HepG2 (cell line): ENCODE measurements at regions of chr17 and their contacts with region 1.

Region 1: GRCh38 chr17:37710344-37710886 is 34.4 kb downstream of the HNF1B start:
- DNase-seq: peak; percentile 99
- ATAC-seq: peak; percentile 54
- H3K4me3 ChIP-seq: no peak overlapping the region
- H3K27ac ChIP-seq: peak overlapping the region; percentile 99
- H3K4me1 ChIP-seq: peaks cover 95% of the 10 kb centered on the region
- H3K27me3 ChIP-seq: no peaks in the 10 kb centered on the region
- CTCF ChIP-seq: no peak
- EP300 ChIP-seq: peak; percentile 34 to 71; a peak in 3 of 4 replicates
- POLR2A ChIP-seq: no peak; a peak in 1 of 4 replicates
- RAD21 ChIP-seq: no peak

Region 2: GRCh38 chr17:37650419-37651003 is 59.9 kb before region 1 on chr17:
- CTCF ChIA-PET with region 1: no interaction called
- POLR2A ChIA-PET with region 1: interaction called, 10 read pairs
- in situ Hi-C with region 1: no loop called
- intact Hi-C with region 1: no loop called
- DNase-seq: peak; percentile 77
- ATAC-seq: peak; percentile 74
- H3K4me3 ChIP-seq: no peak overlapping the region
- H3K27ac ChIP-seq: no peak overlapping the region
- H3K4me1 ChIP-seq: peaks cover 36% of the 10 kb centered on the region
- H3K27me3 ChIP-seq: no peaks in the 10 kb centered on the region; a peak in 1 of 5 replicates
- CTCF ChIP-seq: peak; percentile 81
- EP300 ChIP-seq: no peak
- POLR2A ChIP-seq: no peak
- RAD21 ChIP-seq: peak; percentile 86

Region 3: GRCh38 chr17:37671824-37672547 is 38.4 kb before region 1 on chr17:
- CTCF ChIA-PET with region 1: no interaction called
- POLR2A ChIA-PET with region 1: interaction called, 30 read pairs
- in situ Hi-C with region 1: no loop called
- intact Hi-C with region 1: no loop called
- DNase-seq: peak; percentile 85
- ATAC-seq: peak; percentile 24; the same call in 2 of the 3 replicates
- H3K4me3 ChIP-seq: no peak overlapping the region
- H3K27ac ChIP-seq: peak overlapping the region; percentile 35
- H3K4me1 ChIP-seq: peaks cover 91% of the 10 kb centered on the region
- H3K27me3 ChIP-seq: no peaks in the 10 kb centered on the region
- CTCF ChIP-seq: no peak
- EP300 ChIP-seq: peak in 1 of 2 experiments; percentile 29; a peak in 2 of 4 replicates
- POLR2A ChIP-seq: no peak
- RAD21 ChIP-seq: no peak

Region 4: GRCh38 chr17:37689317-37689716 is 21.1 kb before region 1 on chr17:
- CTCF ChIA-PET with region 1: no interaction called
- POLR2A ChIA-PET with region 1: interaction called, 14 read pairs
- in situ Hi-C with region 1: no loop called
- intact Hi-C with region 1: no loop called
- DNase-seq: peak; percentile 86
- ATAC-seq: peak; percentile 52
- H3K4me3 ChIP-seq: no peak overlapping the region; a peak in 1 of 6 replicates
- H3K27ac ChIP-seq: peak overlapping the region; percentile 33
- H3K4me1 ChIP-seq: peaks cover 77% of the 10 kb centered on the region
- H3K27me3 ChIP-seq: no peaks in the 10 kb centered on the region
- CTCF ChIP-seq: no peak
- EP300 ChIP-seq: peak in 1 of 2 experiments; percentile 87; a peak in 1 of 4 replicates
- POLR2A ChIP-seq: no peak
- RAD21 ChIP-seq: no peak

Region 5: GRCh38 chr17:37732316-37732715 is 21.9 kb after region 1 on chr17:
- CTCF ChIA-PET with region 1: no interaction called
- POLR2A ChIA-PET with region 1: interaction called, 11 read pairs
- in situ Hi-C with region 1: no loop called
- intact Hi-C with region 1: no loop called
- DNase-seq: peak; percentile 46
- ATAC-seq: peak; percentile 68
- H3K4me3 ChIP-seq: no peak overlapping the region
- H3K27ac ChIP-seq: peak overlapping the region; percentile 22
- H3K4me1 ChIP-seq: peaks cover 69% of the 10 kb centered on the region
- H3K27me3 ChIP-seq: no peaks in the 10 kb centered on the region
- CTCF ChIP-seq: no peak
- EP300 ChIP-seq: no peak
- POLR2A ChIP-seq: no peak
- RAD21 ChIP-seq: no peak

Region 6: GRCh38 chr17:37770631-37771518 is 60.5 kb after region 1 on chr17:
- CTCF ChIA-PET with region 1: no interaction called
- POLR2A ChIA-PET with region 1: interaction called, 12 read pairs
- in situ Hi-C with region 1: no loop called
- intact Hi-C with region 1: no loop called
- DNase-seq: peak; percentile 61
- ATAC-seq: peak; percentile 81
- H3K4me3 ChIP-seq: no peak overlapping the region
- H3K27ac ChIP-seq: no peak overlapping the region
- H3K4me1 ChIP-seq: peaks cover 54% of the 10 kb centered on the region
- H3K27me3 ChIP-seq: peaks cover 0 to 4% of the 10 kb centered on the region in 2 experiments; a peak in 3 of 5 replicates
- CTCF ChIP-seq: peak; percentile 95
- EP300 ChIP-seq: no peak
- POLR2A ChIP-seq: no peak
- RAD21 ChIP-seq: peak; percentile 86

Region 7: GRCh38 chr17:37802712-37803416 is 92.4 kb after region 1 on chr17:
- CTCF ChIA-PET with region 1: no interaction called
- POLR2A ChIA-PET with region 1: no interaction called
- in situ Hi-C with region 1: no loop called
- intact Hi-C with region 1: no loop called
- DNase-seq: no peak
- ATAC-seq: peak; percentile 72
- H3K4me3 ChIP-seq: no peak overlapping the region
- H3K27ac ChIP-seq: no peak overlapping the region
- H3K4me1 ChIP-seq: no peaks in the 10 kb centered on the region
- H3K27me3 ChIP-seq: no peaks in the 10 kb centered on the region; a peak in 1 of 5 replicates
- CTCF ChIP-seq: no peak
- EP300 ChIP-seq: no peak
- POLR2A ChIP-seq: no peak
- RAD21 ChIP-seq: no peak

Region 8: GRCh38 chr17:37833237-37833859 is 122.9 kb after region 1 on chr17:
- CTCF ChIA-PET with region 1: no interaction called
- POLR2A ChIA-PET with region 1: no interaction called
- in situ Hi-C with region 1: no loop called
- intact Hi-C with region 1: loop called (anchors 5 kb)
- DNase-seq: no peak
- ATAC-seq: no peak
- H3K4me3 ChIP-seq: no peak overlapping the region
- H3K27ac ChIP-seq: no peak overlapping the region
- H3K4me1 ChIP-seq: peaks cover 46% of the 10 kb centered on the region
- H3K27me3 ChIP-seq: no peaks in the 10 kb centered on the region
- CTCF ChIP-seq: no peak
- EP300 ChIP-seq: no peak
- POLR2A ChIP-seq: no peak
- RAD21 ChIP-seq: no peak

Region 9: DNA sequence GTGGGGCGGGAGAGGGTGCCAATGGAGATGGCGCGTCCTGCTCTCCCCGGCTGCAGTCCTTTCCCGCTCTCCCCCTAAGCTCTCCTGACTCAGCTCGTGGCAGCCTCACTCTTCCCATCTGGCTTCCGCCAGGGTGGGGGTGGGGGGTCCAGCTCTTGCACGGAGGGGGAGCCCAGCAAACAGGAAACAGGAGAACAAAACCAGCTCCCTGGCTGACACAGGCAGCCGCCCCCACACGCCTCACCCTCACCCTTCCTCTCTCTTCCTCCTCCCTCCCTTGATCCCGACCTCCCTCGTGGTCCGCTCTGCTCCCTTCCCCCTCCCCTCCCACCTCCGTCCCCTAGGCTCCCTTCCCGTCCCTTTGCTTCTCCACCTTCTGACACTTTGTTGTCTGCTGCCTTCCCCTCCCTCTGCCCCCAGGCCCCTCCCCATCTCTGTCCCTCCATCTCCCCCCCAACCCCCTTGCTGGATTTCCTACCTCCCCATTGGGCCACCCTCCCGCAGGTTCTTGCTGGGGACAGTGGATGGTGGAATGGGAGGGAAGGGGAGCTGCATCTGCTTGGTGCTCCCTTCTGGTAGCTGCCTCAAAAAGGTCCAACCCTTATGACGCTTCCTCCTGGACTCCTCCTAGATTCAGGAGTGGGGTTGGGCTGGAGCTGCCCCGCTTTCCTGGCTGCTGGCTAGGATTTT is 741.6 kb after region 1 on chr17:
- CTCF ChIA-PET with region 1: no interaction called
- POLR2A ChIA-PET with region 1: no interaction called
- in situ Hi-C with region 1: no loop called
- intact Hi-C with region 1: no loop called
- DNase-seq: no peak
- ATAC-seq: no peak
- H3K4me3 ChIP-seq: no peak overlapping the region
- H3K27ac ChIP-seq: no peak overlapping the region
- H3K4me1 ChIP-seq: peaks cover 33% of the 10 kb centered on the region
- H3K27me3 ChIP-seq: peaks cover 13 to 82% of the 10 kb centered on the region in 2 experiments; a peak in 4 of 5 replicates
- CTCF ChIP-seq: no peak
- EP300 ChIP-seq: no peak
- POLR2A ChIP-seq: no peak
- RAD21 ChIP-seq: no peak

Region 10: DNA sequence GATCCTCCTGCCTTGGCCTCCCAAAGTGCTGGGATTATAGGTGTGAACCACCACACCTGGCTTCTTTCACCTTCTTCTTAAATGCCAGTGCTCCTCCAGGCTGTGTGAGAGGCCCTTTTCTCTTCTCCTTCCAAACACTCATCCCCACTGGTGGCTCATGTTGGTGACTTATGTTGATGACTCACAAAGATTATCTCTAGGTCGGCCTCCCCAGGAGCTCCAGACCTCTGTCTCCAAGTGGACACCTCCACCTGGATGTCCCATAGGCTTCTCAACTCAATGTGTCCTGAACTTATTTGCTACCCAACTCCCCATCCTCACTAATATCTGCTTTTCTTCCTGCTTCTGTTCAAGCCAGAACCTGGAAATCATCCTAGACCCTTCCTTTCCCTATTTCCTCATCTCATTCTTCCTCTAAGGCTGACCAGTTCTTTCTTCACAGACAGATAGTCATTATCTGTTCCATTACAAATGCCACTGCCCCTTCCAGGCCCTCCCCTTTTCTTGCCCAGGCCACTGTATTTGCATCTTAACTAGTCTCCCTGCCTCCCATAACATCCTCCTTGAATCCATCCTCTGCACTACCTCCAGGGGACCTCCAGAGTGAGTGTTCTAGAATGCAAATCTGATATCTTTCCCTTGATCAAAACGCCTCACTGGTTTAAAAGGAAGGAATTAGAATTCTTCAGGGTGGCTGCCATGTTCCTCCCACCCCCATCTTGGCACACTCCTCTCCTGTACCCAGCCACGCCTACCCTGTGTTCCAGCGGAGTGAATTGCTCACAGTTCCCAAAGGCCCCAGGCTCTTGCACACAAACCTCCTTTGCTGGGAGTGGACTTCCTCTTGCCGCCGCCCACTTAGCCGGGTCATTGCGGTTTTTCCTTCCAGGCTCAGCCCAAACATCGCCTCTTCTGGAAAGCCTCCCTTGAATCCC is 1291.6 kb after region 1 on chr17:
- CTCF ChIA-PET with region 1: no interaction called
- POLR2A ChIA-PET with region 1: no interaction called
- in situ Hi-C with region 1: no loop called
- intact Hi-C with region 1: no loop called
- DNase-seq: no peak
- ATAC-seq: no peak
- H3K4me3 ChIP-seq: no peak overlapping the region
- H3K27ac ChIP-seq: no peak overlapping the region
- H3K4me1 ChIP-seq: no peaks in the 10 kb centered on the region
- H3K27me3 ChIP-seq: peaks cover 0 to 37% of the 10 kb centered on the region in 2 experiments
- CTCF ChIP-seq: no peak
- EP300 ChIP-seq: no peak
- POLR2A ChIP-seq: no peak
- RAD21 ChIP-seq: no peak